GM12878 (cell line): ENCODE measurements at regions of chr5 and their contacts with region 1.

Region 1: DNA sequence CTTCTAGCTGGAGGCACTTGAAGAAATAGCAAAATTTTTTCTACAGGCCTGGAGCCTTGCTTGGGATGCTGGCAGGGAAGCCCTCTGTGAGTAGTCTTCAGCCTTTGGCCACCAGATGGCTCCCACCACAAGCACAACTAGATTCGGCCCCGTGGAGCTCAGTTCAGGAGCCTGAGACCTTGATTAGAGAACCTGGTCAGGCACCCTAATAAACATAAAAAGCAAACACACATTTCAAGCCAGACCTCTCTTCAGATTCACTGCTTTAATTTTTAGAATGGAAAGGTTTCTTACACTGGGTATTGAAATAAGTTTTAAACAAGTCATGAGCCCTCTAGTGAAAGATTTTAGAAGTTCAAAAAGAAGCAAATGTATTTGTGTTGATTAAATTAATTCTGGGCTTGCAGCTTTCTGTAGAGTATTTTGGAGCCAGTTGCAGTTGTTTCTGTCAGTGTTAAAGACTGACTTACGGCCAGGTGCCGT is 41.4 kb downstream of the GLRX start:
- DNase-seq: peak; percentile 51
- ATAC-seq: peak; percentile 100
- H3K4me3 ChIP-seq: no peak overlapping the region
- H3K27ac ChIP-seq: no peak overlapping the region
- H3K4me1 ChIP-seq: no peaks in the 10 kb centered on the region
- H3K27me3 ChIP-seq: no peaks in the 10 kb centered on the region
- CTCF ChIP-seq: peak; percentile 84 to 86 (median 86)
- EP300 ChIP-seq: no peak
- POLR2A ChIP-seq: no peak
- RAD21 ChIP-seq: peak; percentile 95

Region 2: GRCh38 chr5:95664204-95664786 is 116.8 kb before region 1 on chr5:
- CTCF ChIA-PET with region 1: interaction called, 177 read pairs
- POLR2A ChIA-PET with region 1: no interaction called
- RAD21 ChIA-PET with region 1: interaction called, 32 read pairs
- SMC1A ChIA-PET with region 1: interaction called, 49 read pairs
- in situ Hi-C with region 1: no loop called
- intact Hi-C with region 1: loop called (anchors 2 kb)
- DNase-seq: peak; percentile 11
- ATAC-seq: peak; percentile 38; the same call in 2 of the 3 replicates
- H3K4me3 ChIP-seq: no peak overlapping the region
- H3K27ac ChIP-seq: no peak overlapping the region
- H3K4me1 ChIP-seq: no peaks in the 10 kb centered on the region
- H3K27me3 ChIP-seq: no peaks in the 10 kb centered on the region
- CTCF ChIP-seq: peak; percentile 66 to 84 (median 80)
- EP300 ChIP-seq: no peak
- POLR2A ChIP-seq: no peak
- RAD21 ChIP-seq: peak; percentile 76

Region 3: DNA sequence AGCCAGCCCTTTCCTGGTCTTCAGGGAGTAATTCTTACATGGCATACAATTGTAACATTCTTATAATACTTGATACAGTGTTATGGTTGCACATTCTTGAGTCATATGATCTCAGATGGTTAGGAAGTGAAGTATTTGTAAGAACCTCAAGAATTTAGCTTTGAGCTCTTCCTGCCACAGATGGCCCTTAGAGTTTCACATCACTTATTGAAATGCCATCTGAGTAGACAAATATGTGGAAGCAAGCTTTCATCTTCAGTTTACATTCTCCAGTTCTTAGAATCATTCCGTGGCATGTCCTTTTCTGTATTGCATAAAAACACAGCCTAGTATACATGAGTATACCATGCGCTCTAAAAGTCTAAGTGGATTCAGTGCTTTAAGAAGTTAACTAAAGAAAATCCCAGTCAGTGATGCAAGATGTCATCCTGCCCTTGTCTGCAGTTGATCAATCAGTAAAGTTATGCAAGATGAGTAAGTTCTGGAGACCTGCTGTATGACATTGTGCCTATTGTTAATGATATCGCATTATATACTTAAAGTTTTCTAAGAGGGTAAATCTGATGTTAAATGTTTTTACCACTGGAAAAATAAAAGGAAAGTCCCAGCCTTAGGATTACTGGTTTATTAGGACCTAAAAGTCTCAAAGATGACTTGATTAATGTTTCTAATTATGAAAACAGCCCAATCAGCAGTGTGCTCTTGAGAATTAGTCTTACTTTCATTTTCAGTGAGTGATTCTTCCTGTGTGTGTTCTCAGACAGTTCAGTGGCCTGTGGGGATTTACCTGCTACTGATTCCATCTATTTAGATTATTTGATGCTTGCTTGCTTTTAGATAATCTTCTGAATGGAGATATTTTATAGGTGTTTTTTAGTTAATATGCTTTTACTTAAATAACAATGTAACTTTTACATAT is 20.6 kb before region 1 on chr5:
- CTCF ChIA-PET with region 1: interaction called, 14 read pairs
- POLR2A ChIA-PET with region 1: interaction called, 4 read pairs
- RAD21 ChIA-PET with region 1: interaction called, 3 read pairs
- SMC1A ChIA-PET with region 1: interaction called, 8 read pairs
- in situ Hi-C with region 1: no loop called
- intact Hi-C with region 1: no loop called
- DNase-seq: peak; percentile 64
- ATAC-seq: peak; percentile 97
- H3K4me3 ChIP-seq: peak overlapping the region; percentile 56
- H3K27ac ChIP-seq: peak overlapping the region; percentile 94
- H3K4me1 ChIP-seq: peaks cover 16% of the 10 kb centered on the region
- H3K27me3 ChIP-seq: no peaks in the 10 kb centered on the region
- CTCF ChIP-seq: no peak
- EP300 ChIP-seq: peak; percentile 3 to 71; a peak in 1 of 4 replicates
- POLR2A ChIP-seq: no peak
- RAD21 ChIP-seq: no peak

Region 4: GRCh38 chr5:95803284-95804148 is 22.4 kb after region 1 on chr5:
- CTCF ChIA-PET with region 1: interaction called, 56 read pairs
- POLR2A ChIA-PET with region 1: interaction called, 5 read pairs
- RAD21 ChIA-PET with region 1: interaction called, 38 read pairs
- SMC1A ChIA-PET with region 1: interaction called, 40 read pairs
- in situ Hi-C with region 1: no loop called
- intact Hi-C with region 1: no loop called
- DNase-seq: no peak
- ATAC-seq: no peak
- H3K4me3 ChIP-seq: no peak overlapping the region
- H3K27ac ChIP-seq: no peak overlapping the region
- H3K4me1 ChIP-seq: peaks cover 11% of the 10 kb centered on the region
- H3K27me3 ChIP-seq: no peaks in the 10 kb centered on the region
- CTCF ChIP-seq: no peak
- EP300 ChIP-seq: no peak
- POLR2A ChIP-seq: no peak
- RAD21 ChIP-seq: no peak

Region 5: DNA sequence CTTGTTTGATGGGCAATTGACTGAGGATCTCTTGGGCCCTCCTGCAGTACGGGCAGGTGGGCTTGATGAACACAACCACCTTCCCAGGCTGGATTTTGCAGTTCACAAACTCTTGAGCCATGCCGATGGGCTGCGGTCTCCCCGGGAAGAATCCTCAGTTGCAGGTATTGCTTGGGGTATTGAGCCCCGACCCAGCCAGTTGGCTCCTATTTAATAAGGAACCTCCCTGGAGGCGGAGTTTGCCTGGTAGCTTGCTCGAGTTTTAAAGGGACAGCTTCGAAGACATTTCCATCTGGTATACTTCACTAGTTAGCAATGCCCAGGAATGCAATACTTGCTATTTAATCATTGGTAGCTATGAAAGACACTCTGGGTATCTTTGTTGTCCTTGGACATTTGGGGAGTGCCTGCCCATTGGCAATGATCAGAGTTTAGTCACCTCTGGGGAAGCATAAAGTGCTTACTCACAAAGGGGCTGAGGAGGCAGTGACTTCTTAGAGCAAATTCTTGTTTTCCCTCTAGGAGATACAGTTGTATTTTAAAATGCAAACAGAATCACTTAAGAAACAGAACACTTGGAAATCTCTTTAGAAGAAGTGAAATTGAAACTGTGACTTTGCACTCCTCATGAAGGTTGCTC is 41.5 kb after region 1 on chr5 and contains the start of gene GLRX:
- CTCF ChIA-PET with region 1: interaction called, 102 read pairs
- POLR2A ChIA-PET with region 1: interaction called, 4 read pairs
- RAD21 ChIA-PET with region 1: interaction called, 51 read pairs
- SMC1A ChIA-PET with region 1: interaction called, 62 read pairs
- in situ Hi-C with region 1: no loop called
- intact Hi-C with region 1: loop called (anchors 2 kb)
- DNase-seq: no peak
- ATAC-seq: peak; percentile 66
- H3K4me3 ChIP-seq: peak within 1 kb of the TSS; percentile 87
- H3K27ac ChIP-seq: peak within 1 kb of the TSS; percentile 86
- H3K4me1 ChIP-seq: peaks cover 26% of the 10 kb centered on the region
- H3K27me3 ChIP-seq: no peaks in the 10 kb centered on the region
- CTCF ChIP-seq: no peak
- EP300 ChIP-seq: 0 out of 4 replicates have a peak, but pooled peaks of 1 of the 2 experiments have one; percentile 33
- POLR2A ChIP-seq: peak; percentile 69
- RAD21 ChIP-seq: no peak
- polyA plus RNA-seq, gene GLRX: 311 to 366 TPM

Region 6: DNA sequence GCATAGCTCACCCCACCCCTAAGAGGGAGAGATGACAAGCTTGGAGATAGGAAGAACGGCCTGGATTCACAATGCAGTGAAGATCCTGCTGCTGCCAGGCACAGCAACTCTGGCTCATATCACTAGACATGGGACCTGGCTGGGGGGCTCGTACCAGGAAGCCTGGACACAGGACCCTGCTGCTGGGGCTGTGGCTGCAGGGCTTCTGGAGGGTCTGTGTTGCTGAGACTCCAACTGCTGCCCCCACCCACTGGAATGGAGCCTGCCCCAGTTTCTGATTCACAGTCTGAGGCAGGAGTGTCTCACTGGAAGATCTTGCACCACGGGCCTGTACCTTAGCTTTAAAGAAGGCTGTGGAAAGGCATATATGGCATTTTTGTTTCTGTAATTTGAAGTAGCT is 72.3 kb after region 1 on chr5:
- CTCF ChIA-PET with region 1: interaction called, 653 read pairs
- POLR2A ChIA-PET with region 1: interaction called, 8 read pairs
- RAD21 ChIA-PET with region 1: interaction called, 209 read pairs
- SMC1A ChIA-PET with region 1: interaction called, 622 read pairs
- in situ Hi-C with region 1: loop called (anchors 5 kb)
- intact Hi-C with region 1: no loop called
- DNase-seq: no peak
- ATAC-seq: no peak
- H3K4me3 ChIP-seq: no peak overlapping the region
- H3K27ac ChIP-seq: no peak overlapping the region
- H3K4me1 ChIP-seq: no peaks in the 10 kb centered on the region
- H3K27me3 ChIP-seq: no peaks in the 10 kb centered on the region
- CTCF ChIP-seq: no peak
- EP300 ChIP-seq: no peak
- POLR2A ChIP-seq: no peak
- RAD21 ChIP-seq: no peak

Region 7: GRCh38 chr5:96101358-96102089 is 320.4 kb after region 1 on chr5:
- CTCF ChIA-PET with region 1: no interaction called
- POLR2A ChIA-PET with region 1: no interaction called
- RAD21 ChIA-PET with region 1: no interaction called
- SMC1A ChIA-PET with region 1: no interaction called
- in situ Hi-C with region 1: no loop called
- intact Hi-C with region 1: no loop called
- DNase-seq: no peak
- ATAC-seq: no peak
- H3K4me3 ChIP-seq: no peak overlapping the region
- H3K27ac ChIP-seq: no peak overlapping the region
- H3K4me1 ChIP-seq: no peaks in the 10 kb centered on the region
- H3K27me3 ChIP-seq: no peaks in the 10 kb centered on the region
- CTCF ChIP-seq: no peak
- EP300 ChIP-seq: no peak
- POLR2A ChIP-seq: no peak
- RAD21 ChIP-seq: no peak

Region 8: GRCh38 chr5:96125231-96125891 is 344.2 kb after region 1 on chr5:
- CTCF ChIA-PET with region 1: no interaction called
- POLR2A ChIA-PET with region 1: no interaction called
- RAD21 ChIA-PET with region 1: no interaction called
- SMC1A ChIA-PET with region 1: no interaction called
- in situ Hi-C with region 1: no loop called
- intact Hi-C with region 1: no loop called
- DNase-seq: no peak
- ATAC-seq: no peak
- H3K4me3 ChIP-seq: no peak overlapping the region
- H3K27ac ChIP-seq: no peak overlapping the region
- H3K4me1 ChIP-seq: no peaks in the 10 kb centered on the region
- H3K27me3 ChIP-seq: no peaks in the 10 kb centered on the region
- CTCF ChIP-seq: no peak
- EP300 ChIP-seq: no peak
- POLR2A ChIP-seq: no peak
- RAD21 ChIP-seq: no peak